ENCODE measurements at regions of chr11 and their contacts with region 1.

Region 1: GRCh38 chr11:117094776-117095175 is 3.5 kb downstream of the SIK3 start:
- DNase-seq: no peak
- H3K4me3 ChIP-seq: no peak overlapping the region
- H3K27ac ChIP-seq: no peak overlapping the region
- H3K4me1 ChIP-seq: peaks cover 52% of the 10 kb centered on the region
- H3K27me3 ChIP-seq: no peaks in the 10 kb centered on the region
- CTCF ChIP-seq: no peak
- POLR2A ChIP-seq: no peak

Region 2: DNA sequence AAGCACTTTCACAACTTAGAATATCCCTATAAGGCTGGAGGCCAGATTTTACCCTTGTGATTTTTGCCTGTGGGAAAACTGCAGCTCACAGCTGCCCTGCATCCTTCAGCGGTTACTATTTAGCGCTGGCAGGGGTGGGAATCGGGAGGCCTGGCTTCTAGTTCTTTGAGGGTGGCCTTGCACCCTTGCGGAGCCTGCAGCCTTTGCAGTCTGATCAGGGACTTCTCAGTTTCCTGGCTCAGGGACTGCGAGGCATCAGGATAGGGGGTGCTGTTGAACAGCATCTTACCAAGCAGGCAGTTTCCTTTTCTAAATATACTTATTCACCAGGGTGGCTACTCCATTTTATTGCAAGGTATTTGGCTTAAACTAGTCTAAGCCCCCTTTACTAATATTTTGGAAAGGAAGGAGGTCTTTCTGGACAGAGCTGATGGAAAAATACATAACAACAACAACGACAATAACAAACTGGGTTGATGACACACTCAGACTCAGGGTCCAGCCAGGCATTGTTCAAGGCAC is 254.5 kb before region 1 on chr11:
- intact Hi-C with region 1: no loop called
- DNase-seq: no peak
- H3K4me3 ChIP-seq: no peak overlapping the region
- H3K27ac ChIP-seq: no peak overlapping the region
- H3K4me1 ChIP-seq: peaks cover 6% of the 10 kb centered on the region
- H3K27me3 ChIP-seq: no peaks in the 10 kb centered on the region
- CTCF ChIP-seq: no peak
- POLR2A ChIP-seq: no peak

Region 3: GRCh38 chr11:116885951-116886655 is 208.7 kb before region 1 on chr11:
- intact Hi-C with region 1: loop called (anchors 5 kb)
- DNase-seq: no peak
- H3K4me3 ChIP-seq: no peak overlapping the region
- H3K27ac ChIP-seq: no peak overlapping the region
- H3K4me1 ChIP-seq: peaks cover 5% of the 10 kb centered on the region
- H3K27me3 ChIP-seq: no peaks in the 10 kb centered on the region
- CTCF ChIP-seq: no peak
- POLR2A ChIP-seq: no peak